ENCODE measurements at regions of chr2 and their contacts with region 1.

Region 1: DNA sequence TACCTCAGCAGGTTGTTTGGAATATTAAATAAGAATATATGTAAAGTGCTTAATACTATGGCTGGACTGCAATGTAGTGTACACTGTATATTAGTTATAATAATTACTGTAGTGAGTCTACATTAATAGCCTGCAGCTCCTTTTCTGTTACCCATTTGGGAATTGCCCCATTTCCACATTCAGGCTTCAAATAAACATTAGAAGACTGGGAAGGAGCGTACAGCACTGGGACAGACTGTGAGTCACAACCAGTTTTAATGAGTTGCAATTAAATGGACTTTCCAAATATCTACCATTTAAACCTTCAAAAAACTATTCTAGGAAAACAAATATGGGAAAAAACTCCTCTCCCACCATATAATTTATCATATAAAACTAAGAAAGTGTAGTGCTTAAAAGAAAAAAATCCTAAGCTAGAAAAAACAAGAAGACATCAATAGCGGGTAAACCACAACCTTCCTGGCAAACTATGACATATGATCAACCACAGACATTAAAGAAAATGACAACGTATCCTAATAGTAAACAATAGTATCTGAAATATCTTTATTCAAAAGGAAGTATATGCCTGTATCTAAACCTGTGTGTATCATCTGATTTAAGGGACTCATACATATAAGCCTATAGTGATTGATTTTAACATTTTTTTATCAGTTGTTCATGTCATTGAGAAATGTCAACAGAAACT is 86.1 kb downstream of the TRIP12 start:
- DNase-seq: peak; percentile 60
- H3K4me3 ChIP-seq: no peak overlapping the region
- H3K27me3 ChIP-seq: no peaks in the 10 kb centered on the region
- CTCF ChIP-seq: no peak

Region 2: DNA sequence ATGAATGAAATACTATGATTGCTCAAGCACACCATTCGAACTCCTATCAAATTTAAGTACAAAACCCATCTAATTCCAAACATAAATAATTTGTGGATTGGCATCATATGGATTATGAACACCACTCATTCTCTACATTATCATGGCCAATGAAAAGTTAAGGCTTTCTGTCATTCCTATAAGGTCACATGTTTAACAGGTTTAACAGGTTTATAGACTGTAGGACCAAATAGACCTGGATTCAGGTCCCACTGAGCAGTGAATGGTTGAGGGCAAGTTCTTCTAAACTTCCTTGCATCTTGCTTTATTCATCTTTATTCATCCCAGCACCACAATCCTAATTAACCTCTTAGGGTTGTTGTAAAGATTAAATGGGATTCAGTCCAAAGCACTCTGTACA is 119.9 kb after region 1 on chr2:
- CTCF ChIA-PET with region 1: no interaction called
- POLR2A ChIA-PET with region 1: interaction called, 14 read pairs
- DNase-seq: no peak
- H3K4me3 ChIP-seq: no peak overlapping the region
- H3K27me3 ChIP-seq: no peaks in the 10 kb centered on the region
- CTCF ChIP-seq: no peak

Region 3: DNA sequence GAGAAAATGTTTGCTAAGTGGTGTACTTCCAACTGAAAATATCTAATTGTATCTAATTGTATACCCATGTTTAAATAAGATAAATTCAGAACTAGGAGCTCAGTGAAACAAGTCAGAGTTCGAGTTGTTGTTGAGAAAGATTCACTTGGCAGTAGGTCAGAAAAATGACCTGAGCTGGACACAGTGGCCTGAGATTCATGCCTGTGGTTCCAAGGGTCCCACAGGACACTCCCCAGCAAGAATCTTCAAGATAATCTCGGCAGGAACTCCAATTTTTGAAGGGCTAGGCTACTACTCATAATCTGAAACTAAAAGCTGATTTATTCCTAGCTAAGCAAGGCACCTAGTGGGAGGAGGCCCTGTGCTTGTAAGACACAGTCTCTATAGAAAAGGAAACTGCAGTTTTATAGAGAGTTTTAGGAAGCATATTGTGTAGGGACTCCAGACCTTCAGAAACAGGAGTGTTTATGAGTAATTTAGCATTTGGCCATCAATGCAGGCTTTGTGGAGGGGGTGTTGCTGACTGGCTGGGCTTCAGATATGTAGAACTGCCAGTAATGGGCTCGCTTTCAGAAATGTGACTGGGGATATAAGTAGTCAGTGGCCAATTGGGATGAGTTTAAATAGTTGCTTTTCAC is 433.0 kb after region 1 on chr2:
- CTCF ChIA-PET with region 1: no interaction called
- POLR2A ChIA-PET with region 1: no interaction called
- DNase-seq: no peak
- H3K4me3 ChIP-seq: no peak overlapping the region
- H3K27me3 ChIP-seq: no peaks in the 10 kb centered on the region
- CTCF ChIP-seq: no peak

Measured in BJ (cell line).